Mammary epithelial cell (primary cell): ENCODE measurements at regions of chr3 and their contacts with region 1.

Region 1: GRCh38 chr3:108662130-108662738 is 72.7 kb downstream of the DZIP3 start:
- DNase-seq: peak; percentile 42
- H3K4me3 ChIP-seq: no peak overlapping the region
- H3K27ac ChIP-seq: no peak overlapping the region
- H3K4me1 ChIP-seq: no peaks in the 10 kb centered on the region
- H3K27me3 ChIP-seq: no peaks in the 10 kb centered on the region
- CTCF ChIP-seq: peak; percentile 61 to 62

Region 2: GRCh38 chr3:107956991-107957900 is 705.0 kb before region 1 on chr3:
- CTCF ChIA-PET with region 1: no interaction called
- dilution Hi-C with region 1: no loop called
- in situ Hi-C with region 1: no loop called
- intact Hi-C with region 1: no loop called
- DNase-seq: no peak
- H3K4me3 ChIP-seq: no peak overlapping the region
- H3K27ac ChIP-seq: no peak overlapping the region
- H3K4me1 ChIP-seq: no peaks in the 10 kb centered on the region
- H3K27me3 ChIP-seq: no peaks in the 10 kb centered on the region
- CTCF ChIP-seq: no peak

Region 3: GRCh38 chr3:108736821-108737220 is 74.6 kb after region 1 on chr3:
- CTCF ChIA-PET with region 1: no interaction called
- dilution Hi-C with region 1: no loop called
- in situ Hi-C with region 1: no loop called
- intact Hi-C with region 1: no loop called
- DNase-seq: peak; percentile 9
- H3K4me3 ChIP-seq: no peak overlapping the region
- H3K27ac ChIP-seq: no peak overlapping the region
- H3K4me1 ChIP-seq: no peaks in the 10 kb centered on the region
- H3K27me3 ChIP-seq: peaks cover 4% of the 10 kb centered on the region
- CTCF ChIP-seq: no peak

Region 4: DNA sequence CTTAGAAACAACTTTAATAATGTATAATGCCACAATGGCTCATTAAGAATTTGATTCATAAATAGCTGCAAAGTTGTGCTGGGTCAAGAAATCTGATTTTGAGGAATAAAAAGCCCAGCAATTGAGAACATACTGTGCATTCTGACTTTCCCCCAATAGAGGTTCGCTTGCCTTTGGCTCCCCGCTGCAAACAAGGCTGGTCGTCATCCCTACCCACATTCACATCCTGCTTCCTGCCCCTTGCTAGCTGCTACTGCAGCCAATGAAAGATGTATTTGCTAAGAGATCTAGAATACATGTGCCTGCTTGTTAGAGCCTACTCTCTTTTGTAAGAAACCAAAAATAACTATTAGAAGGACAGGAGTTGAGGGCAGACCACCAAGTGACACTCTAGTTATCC is 343.2 kb after region 1 on chr3:
- CTCF ChIA-PET with region 1: no interaction called
- dilution Hi-C with region 1: no loop called
- in situ Hi-C with region 1: no loop called
- intact Hi-C with region 1: loop called (anchors 10 kb)
- DNase-seq: no peak
- H3K4me3 ChIP-seq: no peak overlapping the region
- H3K27ac ChIP-seq: no peak overlapping the region
- H3K4me1 ChIP-seq: no peaks in the 10 kb centered on the region
- H3K27me3 ChIP-seq: no peaks in the 10 kb centered on the region
- CTCF ChIP-seq: no peak

Region 5: GRCh38 chr3:109081746-109082510 is 419.7 kb after region 1 on chr3:
- CTCF ChIA-PET with region 1: no interaction called
- dilution Hi-C with region 1: no loop called
- in situ Hi-C with region 1: loop called in 1 of 2 experiments (anchors 10 kb)
- intact Hi-C with region 1: loop called (anchors 1 kb)
- DNase-seq: peak; percentile 75
- H3K4me3 ChIP-seq: no peak overlapping the region
- H3K27ac ChIP-seq: no peak overlapping the region
- H3K4me1 ChIP-seq: no peaks in the 10 kb centered on the region
- H3K27me3 ChIP-seq: no peaks in the 10 kb centered on the region
- CTCF ChIP-seq: peak; percentile 85 to 88